Transverse colon (tissue), 4 donors: ENCODE measurements at regions of chr6 and their contacts with region 1.

Region 1: DNA sequence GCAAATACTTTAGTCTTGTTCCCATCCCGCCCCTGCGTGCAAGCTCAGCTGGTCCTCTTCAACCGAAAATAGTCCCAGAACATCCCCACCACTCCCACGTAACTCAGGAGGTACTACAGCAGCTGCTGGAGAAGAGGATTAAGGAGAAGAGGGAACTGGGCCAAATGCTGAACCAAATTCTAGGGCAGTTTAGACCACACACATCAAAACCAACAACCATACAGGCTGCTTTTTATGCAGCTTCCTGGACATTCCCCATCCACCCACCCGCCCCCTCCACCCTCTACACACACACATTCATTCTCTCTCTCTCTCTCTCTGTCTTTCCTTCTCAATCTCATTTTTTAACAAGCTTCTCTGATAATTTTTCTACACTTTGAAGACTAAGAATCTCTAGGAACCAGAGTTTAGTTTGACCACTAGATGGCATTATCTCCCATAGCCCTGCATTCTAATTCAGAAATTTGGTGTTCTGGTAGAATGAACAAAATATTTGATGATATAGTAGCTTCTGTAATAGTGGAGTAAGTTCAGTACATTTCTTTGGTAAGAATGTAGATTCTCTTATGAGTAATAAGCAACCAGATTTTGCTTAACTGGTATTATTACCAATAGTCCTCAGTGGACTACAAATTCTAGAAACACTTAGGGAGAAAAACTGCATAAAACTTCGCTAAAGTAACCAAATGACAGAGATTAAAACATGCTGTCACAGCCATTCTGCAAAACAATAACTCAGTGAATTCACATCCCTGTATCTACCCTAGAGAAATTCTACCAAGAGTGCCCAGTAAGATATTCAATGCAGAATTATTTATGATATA is 52.1 kb upstream of the BEND6 start:
- DNase-seq: no peak
- H3K4me3 ChIP-seq: no peak overlapping the region
- H3K27ac ChIP-seq: peak overlapping the region in 3 of 4 donors; percentile 11 to 31 (median 30)
- H3K4me1 ChIP-seq: peaks cover 5 to 38% (median 12%) of the 10 kb centered on the region in 4 donors
- H3K27me3 ChIP-seq: no peaks in the 10 kb centered on the region
- CTCF ChIP-seq: peak; percentile 49 to 75 (median 67)
- EP300 ChIP-seq: no peak
- POLR2A ChIP-seq: no peak

Region 2: GRCh38 chr6:57013521-57013926 is 110.7 kb after region 1 on chr6:
- in situ Hi-C with region 1: loop called in 2 of 4 experiments (anchors 10 to 25 kb)
- intact Hi-C with region 1: no loop called
- DNase-seq: no peak
- H3K4me3 ChIP-seq: no peak overlapping the region
- H3K27ac ChIP-seq: no peak overlapping the region
- H3K4me1 ChIP-seq: no peaks in the 10 kb centered on the region
- H3K27me3 ChIP-seq: no peaks in the 10 kb centered on the region
- CTCF ChIP-seq: no peak
- EP300 ChIP-seq: no peak
- POLR2A ChIP-seq: no peak

Region 3: DNA sequence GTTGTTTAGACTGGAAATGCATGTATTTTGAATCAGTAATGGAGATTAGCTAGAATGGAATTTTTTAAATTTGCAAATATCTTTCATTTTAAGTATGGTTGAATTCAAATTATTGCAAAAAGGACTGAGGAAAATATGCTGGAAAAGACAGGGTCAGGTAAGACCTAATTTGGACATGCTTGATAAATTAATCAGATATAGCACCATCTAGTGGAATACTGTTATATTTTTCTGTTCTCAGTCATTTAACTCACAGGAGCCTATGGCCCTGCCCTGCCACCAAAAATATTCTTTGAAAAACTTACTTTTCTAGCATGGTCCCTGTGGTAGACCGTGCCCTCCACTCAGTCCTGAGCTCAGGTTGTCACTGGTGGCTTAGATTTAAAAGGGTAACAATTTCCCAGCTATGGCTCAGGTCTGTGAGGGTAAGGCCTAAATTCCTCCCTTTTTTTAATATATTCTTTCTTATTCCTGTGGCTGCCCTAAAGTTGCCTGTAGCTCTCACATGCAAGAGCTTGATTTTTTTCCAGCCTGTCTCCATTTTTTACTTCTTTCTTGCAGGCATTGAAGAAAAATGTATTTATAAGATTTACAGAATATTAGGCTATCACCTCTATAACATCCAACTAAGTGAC is 118.3 kb after region 1 on chr6:
- in situ Hi-C with region 1: loop called in 3 of 4 experiments (anchors 10 to 25 kb)
- intact Hi-C with region 1: no loop called
- DNase-seq: no peak
- H3K4me3 ChIP-seq: no peak overlapping the region
- H3K27ac ChIP-seq: no peak overlapping the region
- H3K4me1 ChIP-seq: no peaks in the 10 kb centered on the region
- H3K27me3 ChIP-seq: no peaks in the 10 kb centered on the region
- CTCF ChIP-seq: peak; percentile 37 to 58 (median 50)
- EP300 ChIP-seq: no peak
- POLR2A ChIP-seq: no peak

Region 4: GRCh38 chr6:57162516-57162915 is 259.7 kb after region 1 on chr6:
- in situ Hi-C with region 1: no loop called
- intact Hi-C with region 1: loop called (anchors 10 kb)
- DNase-seq: no peak
- H3K4me3 ChIP-seq: no peak overlapping the region
- H3K27ac ChIP-seq: no peak overlapping the region
- H3K4me1 ChIP-seq: no peaks in the 10 kb centered on the region
- H3K27me3 ChIP-seq: no peaks in the 10 kb centered on the region
- CTCF ChIP-seq: no peak
- EP300 ChIP-seq: no peak
- POLR2A ChIP-seq: no peak